HEK293 (cell line): ENCODE measurements at regions of chr22 and their contacts with region 1.

Region 1: GRCh38 chr22:18024276-18024947 is at the start of gene MICAL3:
- H3K4me3 ChIP-seq: peak within 1 kb of the TSS; percentile 60
- H3K27ac ChIP-seq: peak within 1 kb of the TSS; percentile 47; the same call in 1 of the 2 replicates
- H3K4me1 ChIP-seq: peaks cover 5% of the 10 kb centered on the region
- CTCF ChIP-seq: peak; percentile 49; the same call in 1 of the 2 replicates

Region 2: DNA sequence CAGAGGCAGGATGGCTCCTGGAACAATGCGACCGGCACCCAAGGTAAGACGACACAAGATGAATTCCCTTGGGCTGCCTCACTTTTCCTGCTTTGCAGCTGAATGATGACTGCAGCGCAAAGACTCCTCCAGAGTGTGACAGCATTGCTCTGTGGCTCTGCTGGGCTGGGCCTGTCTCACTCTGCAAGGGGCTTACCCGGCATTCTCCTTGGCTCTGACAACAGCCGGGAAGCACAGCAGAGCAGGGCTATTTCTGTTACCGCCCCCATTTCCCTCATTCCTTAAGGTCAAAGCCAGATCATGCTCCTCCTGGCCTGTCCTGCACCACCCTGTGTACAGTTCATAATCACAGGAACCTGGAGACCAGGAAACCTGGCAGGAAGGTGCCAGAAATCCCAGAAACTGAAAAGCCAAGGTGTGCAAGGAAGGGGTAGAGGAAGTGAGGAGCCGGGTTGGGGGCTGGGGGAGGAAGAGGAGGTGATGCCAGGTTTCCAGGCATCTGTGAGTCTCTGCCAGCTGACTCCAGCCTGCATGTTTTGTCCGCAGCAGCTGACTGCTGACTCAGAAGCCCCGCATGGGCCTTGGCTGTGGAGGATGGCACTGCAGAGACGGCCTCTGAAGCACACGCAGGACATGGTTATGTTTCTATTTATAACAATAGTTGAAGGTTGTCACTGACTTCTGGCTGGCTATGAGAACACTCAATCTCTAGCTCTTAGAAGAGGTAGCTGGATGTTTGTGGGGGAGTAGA is 113.7 kb before region 1 on chr22:
- CTCF ChIA-PET with region 1: interaction called, 17 read pairs
- POLR2A ChIA-PET with region 1: no interaction called
- H3K4me3 ChIP-seq: no peak overlapping the region
- H3K27ac ChIP-seq: no peak overlapping the region
- H3K4me1 ChIP-seq: peaks cover 10% of the 10 kb centered on the region
- CTCF ChIP-seq: peak; percentile 60; the same call in 1 of the 2 replicates

Region 3: DNA sequence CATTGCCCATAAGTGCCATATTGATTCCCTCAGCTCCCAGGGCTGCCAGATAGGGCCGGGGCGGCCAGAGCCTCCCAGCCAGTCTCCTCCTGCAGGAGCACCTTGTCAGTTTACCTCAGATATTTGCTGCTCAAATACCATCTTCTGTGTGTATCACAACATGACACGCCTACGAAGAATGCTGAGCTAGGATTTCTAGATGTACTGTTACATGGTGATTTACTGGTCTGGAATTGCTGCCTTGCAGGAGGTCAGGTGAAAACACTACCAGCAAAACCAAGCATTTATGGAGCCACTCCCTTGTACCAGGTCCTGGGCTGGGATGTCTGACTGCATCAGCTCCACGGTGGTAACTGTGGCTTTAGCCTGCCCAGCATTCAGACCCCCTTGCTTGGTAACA is 11.9 kb before region 1 on chr22:
- CTCF ChIA-PET with region 1: interaction called, 11 read pairs
- POLR2A ChIA-PET with region 1: interaction called, 3 read pairs
- H3K4me3 ChIP-seq: no peak overlapping the region
- H3K27ac ChIP-seq: no peak overlapping the region
- H3K4me1 ChIP-seq: no peaks in the 10 kb centered on the region
- CTCF ChIP-seq: no peak

Region 4: GRCh38 chr22:18057568-18058209 is 33.3 kb after region 1 on chr22:
- CTCF ChIA-PET with region 1: interaction called, 34 read pairs
- POLR2A ChIA-PET with region 1: interaction called, 4 read pairs
- H3K4me3 ChIP-seq: no peak overlapping the region
- H3K27ac ChIP-seq: peak overlapping the region; percentile 79; the same call in 1 of the 2 replicates
- H3K4me1 ChIP-seq: peaks cover 24% of the 10 kb centered on the region
- CTCF ChIP-seq: no peak

Region 5: DNA sequence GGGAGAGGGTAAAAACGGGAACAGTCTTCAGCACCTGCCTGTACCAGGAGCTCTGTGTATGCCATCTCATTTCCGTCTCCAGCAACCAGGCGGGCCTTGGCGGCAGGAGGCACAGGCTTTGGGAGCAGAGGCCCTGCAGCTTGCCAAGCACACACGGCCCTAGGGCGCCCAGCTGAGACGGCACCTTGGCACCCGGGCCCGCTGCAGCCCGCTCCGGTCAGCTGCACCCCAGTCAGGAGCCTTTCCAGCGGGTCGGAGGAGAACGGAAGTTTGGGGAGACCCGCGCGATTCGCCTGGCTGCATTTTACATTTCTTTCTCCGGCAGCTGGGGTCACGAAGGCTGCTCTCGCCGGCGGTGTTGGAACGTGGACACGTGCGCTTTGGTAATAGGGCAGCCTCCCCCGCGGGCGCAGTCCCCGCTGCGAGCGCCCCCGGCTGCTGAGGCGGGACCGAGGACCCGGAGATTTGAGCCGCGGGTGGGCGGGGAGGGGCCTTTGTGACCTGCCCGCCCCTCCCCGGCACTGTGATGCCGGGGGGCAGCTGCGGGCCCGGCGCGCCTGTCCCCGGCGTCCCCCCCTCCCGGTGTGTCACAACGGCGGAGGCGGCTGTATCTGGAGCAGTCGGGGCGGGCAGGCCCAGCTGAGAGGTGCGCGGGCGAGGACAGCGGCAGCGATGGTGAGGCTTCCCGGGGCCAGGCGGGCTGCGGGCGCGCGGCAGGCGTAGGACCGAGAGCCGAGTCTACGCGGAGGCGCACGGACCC is 86.0 kb after region 1 on chr22 and contains the start of gene TUBA8:
- CTCF ChIA-PET with region 1: no interaction called
- POLR2A ChIA-PET with region 1: no interaction called
- H3K4me3 ChIP-seq: peak within 1 kb of the TSS; percentile 29
- H3K27ac ChIP-seq: no peak within 1 kb of the TSS
- H3K4me1 ChIP-seq: no peaks in the 10 kb centered on the region
- CTCF ChIP-seq: no peak